CD8-positive, alpha-beta T cell (primary cell): ENCODE measurements at regions of chr5 and their contacts with region 1.

Region 1: GRCh38 chr5:173972925-173973615 is 15.9 kb upstream of the C5orf47 start:
- DNase-seq: peak; percentile 43 to 84 (median 79)
- ATAC-seq: peak; percentile 86
- H3K4me3 ChIP-seq: peak overlapping the region; percentile 25 to 46
- H3K4me3 Mint-ChIP-seq: peak overlapping the region; percentile 79
- H3K27ac ChIP-seq: no peak overlapping the region
- H3K27ac Mint-ChIP-seq: no peak overlapping the region
- H3K4me1 ChIP-seq: peaks cover 5% of the 10 kb centered on the region
- H3K4me1 Mint-ChIP-seq: peaks cover 12% of the 10 kb centered on the region
- H3K27me3 ChIP-seq: no peaks in the 10 kb centered on the region
- H3K27me3 Mint-ChIP-seq: peaks cover 22% of the 10 kb centered on the region
- CTCF ChIP-seq: peak; percentile 77

Region 2: GRCh38 chr5:173573126-173573960 is 399.7 kb before region 1 on chr5:
- CTCF ChIA-PET with region 1: no interaction called
- POLR2A ChIA-PET with region 1: no interaction called
- intact Hi-C with region 1: loop called in 1 of 2 experiments (anchors 1 kb)
- DNase-seq: peak; percentile 39 to 78 (median 64)
- ATAC-seq: peak; percentile 48
- H3K4me3 ChIP-seq: no peak overlapping the region
- H3K4me3 Mint-ChIP-seq: no peak overlapping the region
- H3K27ac ChIP-seq: no peak overlapping the region
- H3K27ac Mint-ChIP-seq: no peak overlapping the region
- H3K4me1 ChIP-seq: peaks cover 4% of the 10 kb centered on the region
- H3K4me1 Mint-ChIP-seq: peaks cover 7% of the 10 kb centered on the region
- H3K27me3 ChIP-seq: peaks cover 5 to 6% of the 10 kb centered on the region in 2 experiments
- H3K27me3 Mint-ChIP-seq: peaks cover 26% of the 10 kb centered on the region
- CTCF ChIP-seq: peak; percentile 94

Region 3: GRCh38 chr5:173623296-173623771 is 349.7 kb before region 1 on chr5:
- CTCF ChIA-PET with region 1: interaction called, 88 read pairs
- POLR2A ChIA-PET with region 1: interaction called, 4 read pairs
- intact Hi-C with region 1: loop called (anchors 1 kb)
- DNase-seq: no peak
- ATAC-seq: no peak
- H3K4me3 ChIP-seq: no peak overlapping the region
- H3K4me3 Mint-ChIP-seq: no peak overlapping the region
- H3K27ac ChIP-seq: no peak overlapping the region
- H3K27ac Mint-ChIP-seq: no peak overlapping the region
- H3K4me1 ChIP-seq: no peaks in the 10 kb centered on the region
- H3K4me1 Mint-ChIP-seq: peaks cover 2% of the 10 kb centered on the region
- H3K27me3 ChIP-seq: no peaks in the 10 kb centered on the region
- H3K27me3 Mint-ChIP-seq: no peaks in the 10 kb centered on the region
- CTCF ChIP-seq: no peak

Region 4: GRCh38 chr5:173887610-173888472 is 85.2 kb before region 1 on chr5 and contains the start of gene CPEB4:
- CTCF ChIA-PET with region 1: no interaction called
- POLR2A ChIA-PET with region 1: no interaction called
- intact Hi-C with region 1: loop called in 1 of 2 experiments (anchors 5 kb)
- DNase-seq: peak; percentile 92 to 100 (median 96)
- ATAC-seq: peak; percentile 95
- H3K4me3 ChIP-seq: peak within 1 kb of the TSS; percentile 68 to 76
- H3K4me3 Mint-ChIP-seq: peak within 1 kb of the TSS; percentile 100
- H3K27ac ChIP-seq: peak within 1 kb of the TSS; percentile 42 to 97
- H3K27ac Mint-ChIP-seq: peak within 1 kb of the TSS; percentile 99
- H3K4me1 ChIP-seq: peaks cover 48% of the 10 kb centered on the region
- H3K4me1 Mint-ChIP-seq: peaks cover 78% of the 10 kb centered on the region
- H3K27me3 ChIP-seq: no peaks in the 10 kb centered on the region
- H3K27me3 Mint-ChIP-seq: no peaks in the 10 kb centered on the region
- CTCF ChIP-seq: no peak
- total RNA-seq, gene CPEB4: 21.7 to 24.3 TPM

Region 5: DNA sequence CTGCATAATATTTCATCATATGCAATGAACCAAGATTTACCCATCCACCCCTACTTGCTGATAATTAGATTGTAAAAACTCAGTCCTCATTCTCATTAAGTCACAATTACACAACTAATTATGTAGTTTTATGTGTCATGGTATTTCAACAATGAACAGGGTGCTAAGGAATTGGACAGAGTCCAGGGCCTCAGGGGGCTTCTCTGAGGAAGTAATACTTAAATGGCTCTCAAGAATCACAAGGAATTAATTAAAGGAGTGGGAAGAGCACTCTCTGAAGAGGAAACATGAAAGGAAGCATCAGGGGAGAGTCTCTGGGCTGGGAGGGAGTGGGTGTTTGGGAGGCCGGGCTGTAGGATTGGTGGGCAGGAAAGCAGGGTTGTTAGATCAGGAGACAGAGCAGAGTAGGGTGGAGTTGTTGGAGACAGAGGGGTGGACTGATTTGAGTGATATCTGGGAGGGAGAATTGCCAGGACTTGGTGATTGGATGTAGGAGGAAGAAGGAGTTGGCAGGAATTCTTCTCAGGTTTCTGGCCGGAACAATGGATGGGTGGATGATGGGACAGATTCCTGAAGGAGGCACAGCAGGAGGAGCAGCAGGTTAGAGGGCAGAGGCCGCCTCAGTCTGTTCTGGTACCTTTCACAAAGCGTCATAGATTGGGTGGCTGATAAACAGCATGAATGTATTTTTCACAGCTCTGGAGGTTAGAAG is 49.5 kb after region 1 on chr5:
- CTCF ChIA-PET with region 1: no interaction called
- POLR2A ChIA-PET with region 1: no interaction called
- intact Hi-C with region 1: no loop called
- DNase-seq: no peak
- ATAC-seq: no peak
- H3K4me3 ChIP-seq: no peak overlapping the region
- H3K4me3 Mint-ChIP-seq: no peak overlapping the region
- H3K27ac ChIP-seq: no peak overlapping the region
- H3K27ac Mint-ChIP-seq: no peak overlapping the region
- H3K4me1 ChIP-seq: no peaks in the 10 kb centered on the region
- H3K4me1 Mint-ChIP-seq: no peaks in the 10 kb centered on the region
- H3K27me3 ChIP-seq: no peaks in the 10 kb centered on the region
- H3K27me3 Mint-ChIP-seq: peaks cover 34% of the 10 kb centered on the region
- CTCF ChIP-seq: no peak